ENCODE measurements at regions of chr5 and their contacts with region 1.

Region 1: GRCh38 chr5:109688971-109689739 is 572 bp upstream of the MAN2A1 start:
- DNase-seq: peak; percentile 50 to 94 (median 74)
- ATAC-seq: peak; percentile 71
- H3K4me3 ChIP-seq: peak overlapping the region; percentile 81 to 93
- H3K4me3 Mint-ChIP-seq: peak overlapping the region; percentile 87
- H3K27ac ChIP-seq: peak overlapping the region; percentile 88 to 93
- H3K27ac Mint-ChIP-seq: peak overlapping the region; percentile 88
- H3K4me1 ChIP-seq: peaks cover 26% of the 10 kb centered on the region
- H3K4me1 Mint-ChIP-seq: peaks cover 32% of the 10 kb centered on the region
- H3K27me3 ChIP-seq: no peaks in the 10 kb centered on the region
- H3K27me3 Mint-ChIP-seq: no peaks in the 10 kb centered on the region
- CTCF ChIP-seq: no peak

Region 2: GRCh38 chr5:108381954-108382783 is 1307.0 kb before region 1 on chr5 and contains the start of gene FBXL17:
- CTCF ChIA-PET with region 1: no interaction called
- POLR2A ChIA-PET with region 1: interaction called, 14 read pairs
- intact Hi-C with region 1: loop called (anchors 1 to 5 kb)
- DNase-seq: peak; percentile 83 to 97 (median 90)
- ATAC-seq: peak; percentile 75
- H3K4me3 ChIP-seq: peak within 1 kb of the TSS; percentile 59 to 63
- H3K4me3 Mint-ChIP-seq: peak within 1 kb of the TSS; percentile 94
- H3K27ac ChIP-seq: peak within 1 kb of the TSS; percentile 84 to 86
- H3K27ac Mint-ChIP-seq: peak within 1 kb of the TSS; percentile 99
- H3K4me1 ChIP-seq: peaks cover 11% of the 10 kb centered on the region
- H3K4me1 Mint-ChIP-seq: peaks cover 36% of the 10 kb centered on the region
- H3K27me3 ChIP-seq: no peaks in the 10 kb centered on the region
- H3K27me3 Mint-ChIP-seq: no peaks in the 10 kb centered on the region
- CTCF ChIP-seq: no peak
- total RNA-seq, gene FBXL17: 13.5 to 17.9 TPM

Region 3: GRCh38 chr5:109630093-109630492 is 59.1 kb before region 1 on chr5:
- CTCF ChIA-PET with region 1: no interaction called
- POLR2A ChIA-PET with region 1: no interaction called
- intact Hi-C with region 1: no loop called
- DNase-seq: no peak
- ATAC-seq: no peak
- H3K4me3 ChIP-seq: no peak overlapping the region
- H3K4me3 Mint-ChIP-seq: no peak overlapping the region
- H3K27ac ChIP-seq: no peak overlapping the region
- H3K27ac Mint-ChIP-seq: no peak overlapping the region
- H3K4me1 ChIP-seq: no peaks in the 10 kb centered on the region
- H3K4me1 Mint-ChIP-seq: no peaks in the 10 kb centered on the region
- H3K27me3 ChIP-seq: no peaks in the 10 kb centered on the region
- H3K27me3 Mint-ChIP-seq: peaks cover 6% of the 10 kb centered on the region
- CTCF ChIP-seq: no peak

Region 4: GRCh38 chr5:109705596-109705995 is 16.4 kb after region 1 on chr5:
- CTCF ChIA-PET with region 1: interaction called, 7 read pairs
- POLR2A ChIA-PET with region 1: interaction called, 12 read pairs
- intact Hi-C with region 1: loop called (anchors 1 to 2 kb)
- DNase-seq: no peak
- ATAC-seq: no peak
- H3K4me3 ChIP-seq: no peak overlapping the region
- H3K4me3 Mint-ChIP-seq: no peak overlapping the region
- H3K27ac ChIP-seq: no peak overlapping the region
- H3K27ac Mint-ChIP-seq: no peak overlapping the region
- H3K4me1 ChIP-seq: peaks cover 70% of the 10 kb centered on the region
- H3K4me1 Mint-ChIP-seq: peaks cover 95% of the 10 kb centered on the region
- H3K27me3 ChIP-seq: no peaks in the 10 kb centered on the region
- H3K27me3 Mint-ChIP-seq: no peaks in the 10 kb centered on the region
- CTCF ChIP-seq: no peak

Region 5: GRCh38 chr5:109852371-109853155 is 163.4 kb after region 1 on chr5:
- CTCF ChIA-PET with region 1: interaction called, 3 read pairs
- POLR2A ChIA-PET with region 1: interaction called, 14 read pairs
- intact Hi-C with region 1: loop called (anchors 5 kb)
- DNase-seq: peak in 2 of 9 experiments; percentile 31 to 49
- ATAC-seq: peak; percentile 45
- H3K4me3 ChIP-seq: no peak overlapping the region
- H3K4me3 Mint-ChIP-seq: peak overlapping the region; percentile 24
- H3K27ac ChIP-seq: peak overlapping the region in 1 of 2 experiments; percentile 36
- H3K27ac Mint-ChIP-seq: peak overlapping the region; percentile 76
- H3K4me1 ChIP-seq: peaks cover 84% of the 10 kb centered on the region
- H3K4me1 Mint-ChIP-seq: peaks cover 87% of the 10 kb centered on the region
- H3K27me3 ChIP-seq: no peaks in the 10 kb centered on the region
- H3K27me3 Mint-ChIP-seq: no peaks in the 10 kb centered on the region
- CTCF ChIP-seq: no peak

Region 6: DNA sequence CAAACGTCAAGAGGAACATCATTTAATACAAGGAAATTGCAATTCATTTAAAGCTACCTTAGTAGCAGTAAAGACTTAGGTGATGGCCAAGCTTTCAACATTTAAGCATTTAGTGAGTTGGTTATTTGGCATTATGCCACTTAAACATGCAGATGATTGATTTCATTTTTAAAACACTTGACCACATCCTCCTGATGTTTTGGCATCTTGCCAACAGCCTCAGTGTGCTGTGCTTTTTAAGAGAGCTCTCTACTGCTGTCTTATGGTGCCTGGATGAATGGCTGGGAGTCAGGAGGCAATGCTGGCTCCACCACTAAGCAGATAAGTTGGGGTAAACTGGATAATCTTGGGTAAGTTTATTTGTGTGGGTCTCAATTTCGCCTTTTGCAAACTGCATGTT is 365.1 kb after region 1 on chr5:
- CTCF ChIA-PET with region 1: interaction called, 5 read pairs
- POLR2A ChIA-PET with region 1: interaction called, 20 read pairs
- intact Hi-C with region 1: loop called (anchors 1 to 2 kb)
- DNase-seq: peak; percentile 46 to 95 (median 71)
- ATAC-seq: peak; percentile 93
- H3K4me3 ChIP-seq: no peak overlapping the region
- H3K4me3 Mint-ChIP-seq: peak overlapping the region; percentile 24
- H3K27ac ChIP-seq: peak overlapping the region in 1 of 2 experiments; percentile 44
- H3K27ac Mint-ChIP-seq: peak overlapping the region; percentile 85
- H3K4me1 ChIP-seq: peaks cover 29% of the 10 kb centered on the region
- H3K4me1 Mint-ChIP-seq: peaks cover 43% of the 10 kb centered on the region
- H3K27me3 ChIP-seq: no peaks in the 10 kb centered on the region
- H3K27me3 Mint-ChIP-seq: no peaks in the 10 kb centered on the region
- CTCF ChIP-seq: peak; percentile 62

Region 7: GRCh38 chr5:110625376-110625999 is 936.3 kb after region 1 on chr5:
- CTCF ChIA-PET with region 1: interaction called, 13 read pairs
- POLR2A ChIA-PET with region 1: no interaction called
- intact Hi-C with region 1: loop called (anchors 1 to 2 kb)
- DNase-seq: peak in 2 of 9 experiments; percentile 15 to 42
- ATAC-seq: no peak
- H3K4me3 ChIP-seq: no peak overlapping the region
- H3K4me3 Mint-ChIP-seq: no peak overlapping the region
- H3K27ac ChIP-seq: no peak overlapping the region
- H3K27ac Mint-ChIP-seq: no peak overlapping the region
- H3K4me1 ChIP-seq: no peaks in the 10 kb centered on the region
- H3K4me1 Mint-ChIP-seq: no peaks in the 10 kb centered on the region
- H3K27me3 ChIP-seq: peaks cover 0 to under 1% of the 10 kb centered on the region in 2 experiments
- H3K27me3 Mint-ChIP-seq: peaks cover 3% of the 10 kb centered on the region
- CTCF ChIP-seq: peak; percentile 74

Region 8: GRCh38 chr5:111092062-111092853 is 1403.1 kb after region 1 on chr5 and contains the start of gene WDR36:
- CTCF ChIA-PET with region 1: no interaction called
- POLR2A ChIA-PET with region 1: no interaction called
- intact Hi-C with region 1: loop called in 1 of 2 experiments (anchors 10 kb)
- DNase-seq: peak; percentile 77 to 94 (median 86)
- ATAC-seq: peak; percentile 92
- H3K4me3 ChIP-seq: peak within 1 kb of the TSS; percentile 96
- H3K4me3 Mint-ChIP-seq: peak within 1 kb of the TSS; percentile 95
- H3K27ac ChIP-seq: peak within 1 kb of the TSS; percentile 86 to 89
- H3K27ac Mint-ChIP-seq: peak within 1 kb of the TSS; percentile 94
- H3K4me1 ChIP-seq: peaks cover 24% of the 10 kb centered on the region
- H3K4me1 Mint-ChIP-seq: peaks cover 38% of the 10 kb centered on the region
- H3K27me3 ChIP-seq: no peaks in the 10 kb centered on the region
- H3K27me3 Mint-ChIP-seq: peaks cover 4% of the 10 kb centered on the region
- CTCF ChIP-seq: no peak
- total RNA-seq, gene WDR36: 29.5 to 32.6 TPM